Vagina (tissue), 2 donors: ENCODE measurements at regions of chr14 and their contacts with region 1.

Region 1: GRCh38 chr14:33589326-33589725 is 361.5 kb downstream of the EGLN3 start:
- DNase-seq: peak in 1 of 2 donors; percentile 89
- H3K4me3 ChIP-seq: no peak overlapping the region
- H3K27ac ChIP-seq: no peak overlapping the region
- H3K4me1 ChIP-seq: no peaks in the 10 kb centered on the region
- H3K27me3 ChIP-seq: no peaks in the 10 kb centered on the region
- CTCF ChIP-seq: no peak
- POLR2A ChIP-seq: no peak

Region 2: GRCh38 chr14:31834616-31835015 is 1754.7 kb before region 1 on chr14:
- intact Hi-C with region 1: no loop called
- DNase-seq: no peak
- H3K4me3 ChIP-seq: no peak overlapping the region
- H3K27ac ChIP-seq: no peak overlapping the region
- H3K4me1 ChIP-seq: peaks cover under 1% of the 10 kb centered on the region
- H3K27me3 ChIP-seq: no peaks in the 10 kb centered on the region
- CTCF ChIP-seq: no peak
- POLR2A ChIP-seq: no peak

Region 3: DNA sequence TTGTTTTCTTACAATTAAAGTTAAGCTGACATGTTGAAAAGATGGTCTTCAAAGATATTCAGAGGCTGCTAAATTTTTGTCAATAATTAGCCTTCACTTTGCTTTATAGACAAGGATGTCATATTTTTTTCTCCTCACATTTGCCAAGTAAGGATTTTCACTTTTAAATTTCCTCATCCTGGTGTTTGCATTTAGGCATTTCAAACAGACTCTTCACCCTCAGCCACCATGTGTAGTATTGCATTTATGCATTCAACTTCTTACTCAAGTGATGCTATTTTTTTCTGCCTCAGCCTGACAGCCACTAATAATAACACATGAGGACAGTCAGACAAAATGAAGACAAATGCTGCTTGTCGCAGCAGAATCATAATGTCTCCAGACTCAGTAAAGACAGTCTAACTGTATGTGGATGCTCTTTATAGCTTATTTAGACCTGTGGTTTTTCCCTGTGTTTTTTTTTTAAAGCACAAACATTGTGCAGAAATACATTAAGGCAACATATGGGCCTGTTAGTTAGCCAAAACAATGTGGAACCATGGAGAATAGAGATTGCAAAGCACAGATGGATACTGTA is 169.2 kb before region 1 on chr14:
- intact Hi-C with region 1: no loop called
- DNase-seq: no peak
- H3K4me3 ChIP-seq: no peak overlapping the region
- H3K27ac ChIP-seq: no peak overlapping the region
- H3K4me1 ChIP-seq: no peaks in the 10 kb centered on the region
- H3K27me3 ChIP-seq: no peaks in the 10 kb centered on the region
- CTCF ChIP-seq: no peak
- POLR2A ChIP-seq: no peak

Region 4: DNA sequence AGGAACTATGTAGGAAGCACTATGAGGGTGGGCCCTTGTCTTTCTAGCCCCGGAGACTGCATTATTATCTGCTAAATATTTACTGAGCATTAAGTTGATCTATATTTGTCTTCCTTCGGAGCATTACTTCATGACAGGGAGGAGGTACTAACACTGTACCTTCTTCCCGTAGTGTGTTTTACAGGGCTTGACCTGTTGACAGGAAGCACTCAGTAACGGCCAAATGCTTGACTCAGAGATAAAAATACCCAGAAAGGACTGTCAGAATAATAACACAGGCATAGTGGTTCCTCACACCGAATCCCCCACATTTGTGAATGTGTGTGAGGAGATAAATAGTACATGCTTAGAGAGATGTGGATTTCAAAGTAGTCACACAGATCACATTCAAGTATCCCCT is 105.1 kb before region 1 on chr14:
- intact Hi-C with region 1: no loop called
- DNase-seq: no peak
- H3K4me3 ChIP-seq: no peak overlapping the region
- H3K27ac ChIP-seq: no peak overlapping the region
- H3K4me1 ChIP-seq: no peaks in the 10 kb centered on the region
- H3K27me3 ChIP-seq: no peaks in the 10 kb centered on the region
- CTCF ChIP-seq: no peak
- POLR2A ChIP-seq: no peak

Region 5: GRCh38 chr14:33647385-33647786 is 58.1 kb after region 1 on chr14:
- intact Hi-C with region 1: loop called (anchors 2 kb)
- DNase-seq: no peak
- H3K4me3 ChIP-seq: no peak overlapping the region
- H3K27ac ChIP-seq: no peak overlapping the region
- H3K4me1 ChIP-seq: no peaks in the 10 kb centered on the region
- H3K27me3 ChIP-seq: no peaks in the 10 kb centered on the region
- CTCF ChIP-seq: no peak
- POLR2A ChIP-seq: no peak